Posterior cingulate gyrus (tissue), 11 donors: ENCODE measurements at regions of chr4 and their contacts with region 1.

Region 1: GRCh38 chr4:151718984-151719955 is 41.5 kb downstream of the GATB start:
- DNase-seq: peak in 7 of 10 donors; percentile 19 to 90 (median 52)

Region 2: DNA sequence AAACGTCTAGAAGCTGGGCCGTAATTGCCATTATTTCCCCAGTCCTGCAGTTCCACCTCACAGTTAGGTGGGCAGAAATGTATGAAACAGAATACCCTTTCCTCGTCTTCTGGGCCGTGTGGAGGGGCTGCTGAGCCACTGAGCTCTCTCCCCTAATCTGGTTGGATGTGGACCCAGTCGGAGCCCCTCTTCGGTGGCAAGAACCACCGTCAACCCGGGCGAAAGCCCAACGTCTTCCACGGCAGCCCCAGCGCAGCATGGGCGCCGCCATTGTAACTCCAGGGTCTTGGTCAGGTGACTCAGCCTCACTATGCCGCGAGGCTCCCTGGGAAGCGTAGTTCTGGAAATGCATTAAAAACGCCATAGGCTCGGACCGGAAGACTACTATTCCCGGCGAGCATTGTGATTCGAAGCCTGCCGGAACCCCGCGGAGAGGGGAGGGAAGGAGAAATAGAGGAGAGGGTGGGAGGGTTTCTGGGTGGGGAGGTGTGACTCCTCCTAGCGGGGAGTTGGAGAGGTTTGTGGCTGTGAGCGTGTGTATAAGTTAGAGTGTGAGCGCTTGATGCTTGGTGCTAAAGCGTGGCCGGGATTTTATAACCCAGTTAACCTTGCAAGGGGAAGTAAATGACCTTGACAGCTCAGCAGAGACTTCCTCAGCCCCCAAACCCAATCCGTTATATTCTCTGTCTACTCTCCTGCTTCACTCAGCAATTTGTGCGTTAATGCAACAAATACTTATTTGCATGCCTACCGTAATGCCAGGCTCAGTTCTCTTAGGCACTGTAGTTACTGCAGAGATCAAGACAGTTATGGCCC is 41.6 kb after region 1 on chr4 and contains the start of gene GATB:
- intact Hi-C with region 1: loop called (anchors 5 kb)
- DNase-seq: peak; percentile 92 to 99 (median 96)

Region 3: GRCh38 chr4:152021788-152022438 is 302.6 kb after region 1 on chr4:
- intact Hi-C with region 1: loop called (anchors 10 kb)
- DNase-seq: peak; percentile 85 to 99 (median 92)